IMR-90 (cell line): ENCODE measurements at regions of chr5 and their contacts with region 1.

Region 1: DNA sequence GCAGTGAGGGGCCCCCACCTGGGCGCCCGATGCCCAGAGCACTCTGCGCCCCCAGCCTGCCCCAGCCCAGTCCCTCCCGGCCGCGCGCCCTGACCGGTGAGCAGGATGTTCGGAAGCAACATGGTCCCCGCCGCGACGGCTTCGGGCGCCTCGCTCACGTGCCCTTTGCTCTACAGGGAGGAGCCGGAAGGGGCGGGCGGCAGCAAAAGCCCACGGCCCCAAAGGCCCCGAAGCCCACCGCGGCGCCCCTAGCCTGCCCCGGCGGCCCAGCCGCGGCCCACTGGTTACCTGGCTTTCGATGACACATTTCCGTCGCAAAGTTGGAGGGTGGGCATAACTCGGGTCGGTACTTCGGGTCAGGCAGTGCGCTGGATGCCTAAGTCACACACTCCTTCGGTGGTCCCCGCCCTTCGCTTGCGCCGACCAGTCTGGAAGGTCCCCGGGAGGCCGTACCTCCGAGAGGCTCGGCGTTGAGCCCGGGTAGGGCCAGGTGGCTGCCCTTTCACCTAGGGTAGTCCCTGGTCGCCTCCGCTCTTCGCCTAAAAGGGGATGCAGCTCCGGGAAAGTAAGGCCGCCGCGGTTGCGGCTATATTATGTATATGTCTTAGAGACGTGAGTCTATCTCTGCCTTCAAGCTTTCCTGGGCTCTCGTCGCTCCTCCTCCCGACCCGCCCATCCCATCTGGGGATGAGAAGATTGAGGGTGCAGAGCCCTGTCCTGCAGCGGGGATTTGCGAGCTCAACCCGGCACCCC is at the starts of genes AK6, RAD17 and TAF9:
- DNase-seq: peak; percentile 88
- ATAC-seq: peak; percentile 98
- H3K4me3 ChIP-seq: peak within 1 kb of the TSS; percentile 64
- H3K27ac ChIP-seq: peak within 1 kb of the TSS; percentile 99
- H3K4me1 ChIP-seq: no peaks in the 10 kb centered on the region; the same call in 1 of the 2 replicates
- H3K27me3 ChIP-seq: no peaks in the 10 kb centered on the region
- CTCF ChIP-seq: no peak
- POLR2A ChIP-seq: peak; percentile 93
- RAD21 ChIP-seq: no peak
- total RNA-seq, gene AK6: 14.7 and 38.6 TPM in 2 replicates
- total RNA-seq, gene RAD17: 10.9 and 13.3 TPM in 2 replicates
- total RNA-seq, gene TAF9: 104 and 127 TPM in 2 replicates

Region 2: GRCh38 chr5:68329554-68330255 is 1039.8 kb before region 1 on chr5:
- CTCF ChIA-PET with region 1: no interaction called
- POLR2A ChIA-PET with region 1: no interaction called
- dilution Hi-C with region 1: no loop called
- in situ Hi-C with region 1: no loop called
- intact Hi-C with region 1: no loop called
- DNase-seq: no peak
- ATAC-seq: no peak
- H3K4me3 ChIP-seq: no peak overlapping the region
- H3K27ac ChIP-seq: no peak overlapping the region
- H3K4me1 ChIP-seq: peaks cover 5% of the 10 kb centered on the region
- H3K27me3 ChIP-seq: no peaks in the 10 kb centered on the region; the same call in 1 of the 2 replicates
- CTCF ChIP-seq: no peak
- POLR2A ChIP-seq: no peak
- RAD21 ChIP-seq: no peak

Region 3: DNA sequence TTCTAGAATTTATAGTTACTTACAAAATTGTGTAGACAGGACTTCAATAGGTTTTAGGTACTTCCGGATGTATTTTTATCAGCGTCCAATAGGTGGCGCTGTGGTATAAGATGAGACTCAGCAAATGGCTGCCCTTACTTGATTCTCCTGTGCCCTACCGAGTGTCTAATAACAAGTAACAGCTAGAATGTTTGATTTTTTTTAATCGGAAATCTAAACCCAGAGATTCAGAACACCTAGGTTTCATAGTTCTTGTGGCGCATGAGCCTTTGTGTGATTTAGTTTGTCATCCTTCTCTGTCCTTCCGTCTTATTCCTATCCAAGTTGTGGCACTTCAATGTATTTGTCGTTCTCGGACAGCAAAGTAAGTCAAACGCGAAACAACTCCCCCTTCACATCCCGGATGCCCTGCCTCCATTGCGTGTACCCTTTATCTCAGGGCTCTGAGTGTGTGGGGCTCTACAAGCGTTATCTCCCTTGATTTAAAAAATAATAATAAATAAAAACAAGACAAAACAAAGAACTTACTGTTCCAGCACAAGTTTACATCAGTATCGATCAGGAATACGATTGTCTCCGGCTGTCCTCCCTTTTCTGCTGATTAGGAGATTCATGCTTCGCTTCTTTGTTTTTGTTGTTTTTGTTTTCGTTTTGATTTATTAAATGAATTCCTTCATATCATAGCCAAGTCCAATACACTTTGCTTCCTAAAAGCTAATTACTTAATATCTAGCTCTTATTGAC is 326.5 kb before region 1 on chr5:
- CTCF ChIA-PET with region 1: no interaction called
- POLR2A ChIA-PET with region 1: no interaction called
- dilution Hi-C with region 1: no loop called
- in situ Hi-C with region 1: no loop called
- intact Hi-C with region 1: loop called (anchors 2 kb)
- DNase-seq: peak; percentile 93
- ATAC-seq: peak; percentile 96
- H3K4me3 ChIP-seq: peak overlapping the region; percentile 53
- H3K27ac ChIP-seq: peak overlapping the region; percentile 28; the same call in 1 of the 2 replicates
- H3K4me1 ChIP-seq: no peaks in the 10 kb centered on the region
- H3K27me3 ChIP-seq: no peaks in the 10 kb centered on the region; the same call in 1 of the 2 replicates
- CTCF ChIP-seq: peak; percentile 90
- POLR2A ChIP-seq: no peak
- RAD21 ChIP-seq: peak; percentile 88

Region 4: GRCh38 chr5:69093771-69094482 is 275.6 kb before region 1 on chr5 and contains the start of gene SLC30A5:
- CTCF ChIA-PET with region 1: interaction called, 3 read pairs
- POLR2A ChIA-PET with region 1: interaction called, 3 read pairs
- dilution Hi-C with region 1: no loop called
- in situ Hi-C with region 1: no loop called
- intact Hi-C with region 1: loop called (anchors 2 kb)
- DNase-seq: peak; percentile 100
- ATAC-seq: peak; percentile 100
- H3K4me3 ChIP-seq: peak within 1 kb of the TSS; percentile 55
- H3K27ac ChIP-seq: peak within 1 kb of the TSS; percentile 64
- H3K4me1 ChIP-seq: peaks cover 3% of the 10 kb centered on the region; the same call in 1 of the 2 replicates
- H3K27me3 ChIP-seq: no peaks in the 10 kb centered on the region
- CTCF ChIP-seq: peak; percentile 95
- POLR2A ChIP-seq: peak; percentile 97
- RAD21 ChIP-seq: peak; percentile 93
- total RNA-seq, gene SLC30A5: 34.8 and 63.3 TPM in 2 replicates

Region 5: GRCh38 chr5:69189162-69190086 is 180.1 kb before region 1 on chr5 and contains the start of gene CENPH:
- CTCF ChIA-PET with region 1: no interaction called
- POLR2A ChIA-PET with region 1: no interaction called
- dilution Hi-C with region 1: no loop called
- in situ Hi-C with region 1: no loop called
- intact Hi-C with region 1: loop called (anchors 10 kb)
- DNase-seq: peak; percentile 88
- ATAC-seq: peak; percentile 94
- H3K4me3 ChIP-seq: peak within 1 kb of the TSS; percentile 59
- H3K27ac ChIP-seq: peak within 1 kb of the TSS; percentile 79
- H3K4me1 ChIP-seq: no peaks in the 10 kb centered on the region
- H3K27me3 ChIP-seq: no peaks in the 10 kb centered on the region
- CTCF ChIP-seq: no peak
- POLR2A ChIP-seq: peak; percentile 80
- RAD21 ChIP-seq: no peak
- total RNA-seq, gene CENPH: 3.8 and 10.8 TPM in 2 replicates

Region 6: GRCh38 chr5:69271376-69271775 is 98.2 kb before region 1 on chr5:
- CTCF ChIA-PET with region 1: no interaction called
- POLR2A ChIA-PET with region 1: no interaction called
- dilution Hi-C with region 1: no loop called
- in situ Hi-C with region 1: no loop called
- intact Hi-C with region 1: loop called (anchors 5 kb)
- DNase-seq: peak; percentile 60
- ATAC-seq: peak; percentile 67
- H3K4me3 ChIP-seq: no peak overlapping the region
- H3K27ac ChIP-seq: no peak overlapping the region
- H3K4me1 ChIP-seq: no peaks in the 10 kb centered on the region
- H3K27me3 ChIP-seq: no peaks in the 10 kb centered on the region
- CTCF ChIP-seq: no peak
- POLR2A ChIP-seq: no peak
- RAD21 ChIP-seq: no peak

Region 7: GRCh38 chr5:69404659-69405330 is 35.2 kb after region 1 on chr5:
- CTCF ChIA-PET with region 1: no interaction called
- POLR2A ChIA-PET with region 1: no interaction called
- dilution Hi-C with region 1: no loop called
- in situ Hi-C with region 1: no loop called
- intact Hi-C with region 1: loop called (anchors 5 kb)
- DNase-seq: no peak
- ATAC-seq: no peak
- H3K4me3 ChIP-seq: no peak overlapping the region
- H3K27ac ChIP-seq: no peak overlapping the region
- H3K4me1 ChIP-seq: no peaks in the 10 kb centered on the region
- H3K27me3 ChIP-seq: no peaks in the 10 kb centered on the region
- CTCF ChIP-seq: no peak
- POLR2A ChIP-seq: no peak
- RAD21 ChIP-seq: no peak

Region 8: DNA sequence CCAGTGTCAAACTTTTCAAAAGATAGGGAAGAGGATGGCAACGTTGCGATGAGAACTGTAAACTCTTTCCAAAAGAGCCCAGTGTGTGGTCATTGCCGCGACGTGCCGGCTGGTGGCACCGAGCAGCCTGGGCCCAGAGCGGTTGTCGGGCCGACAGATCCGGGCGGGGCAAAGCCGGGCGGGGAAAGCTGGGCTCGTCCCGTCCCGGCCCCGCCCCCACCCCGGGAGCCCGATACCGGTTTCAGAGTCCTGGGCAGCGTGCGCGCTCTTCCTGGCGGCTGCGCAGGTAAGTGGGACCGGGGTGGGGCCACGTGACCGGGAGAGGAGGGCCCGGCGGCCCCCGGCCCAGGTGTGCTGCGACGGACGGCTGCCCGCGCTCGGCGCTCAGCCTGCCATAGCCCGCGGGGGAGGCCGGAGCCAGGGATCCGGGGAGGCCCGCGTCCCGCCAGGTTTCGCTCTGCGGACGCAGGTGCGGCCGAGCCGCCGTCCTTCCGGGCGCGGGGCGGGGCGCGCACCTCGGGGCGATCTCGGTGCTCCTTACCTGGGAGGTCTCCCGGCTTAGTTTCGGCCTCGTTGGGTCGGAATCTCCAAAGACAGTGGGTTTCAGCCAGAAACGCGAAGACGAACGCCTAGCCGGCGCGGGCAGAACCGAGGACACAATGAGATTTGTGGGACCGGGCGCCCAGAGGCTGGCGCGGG is 45.5 kb after region 1 on chr5 and contains the start of gene MARVELD2:
- CTCF ChIA-PET with region 1: no interaction called
- POLR2A ChIA-PET with region 1: no interaction called
- dilution Hi-C with region 1: no loop called
- in situ Hi-C with region 1: no loop called
- intact Hi-C with region 1: loop called (anchors 5 kb)
- DNase-seq: peak; percentile 6
- ATAC-seq: peak; percentile 99
- H3K4me3 ChIP-seq: peak within 1 kb of the TSS; percentile 43
- H3K27ac ChIP-seq: no peak within 1 kb of the TSS
- H3K4me1 ChIP-seq: no peaks in the 10 kb centered on the region
- H3K27me3 ChIP-seq: no peaks in the 10 kb centered on the region
- CTCF ChIP-seq: peak; percentile 34
- POLR2A ChIP-seq: no peak
- RAD21 ChIP-seq: peak; percentile 43
- total RNA-seq, gene MARVELD2: 0.54 and 0.83 TPM in 2 replicates